BJ (cell line): ENCODE measurements at regions of chr6 and their contacts with region 1.

Region 1: GRCh38 chr6:73610444-73611275 is 43.1 kb downstream of the SLC17A5 start:
- DNase-seq: peak; percentile 31
- H3K4me3 ChIP-seq: no peak overlapping the region
- H3K27me3 ChIP-seq: no peaks in the 10 kb centered on the region
- CTCF ChIP-seq: peak; percentile 57

Region 2: GRCh38 chr6:73491377-73491776 is 119.3 kb before region 1 on chr6:
- CTCF ChIA-PET with region 1: interaction called, 14 read pairs
- POLR2A ChIA-PET with region 1: no interaction called
- DNase-seq: no peak
- H3K4me3 ChIP-seq: no peak overlapping the region
- H3K27me3 ChIP-seq: no peaks in the 10 kb centered on the region
- CTCF ChIP-seq: no peak

Region 3: DNA sequence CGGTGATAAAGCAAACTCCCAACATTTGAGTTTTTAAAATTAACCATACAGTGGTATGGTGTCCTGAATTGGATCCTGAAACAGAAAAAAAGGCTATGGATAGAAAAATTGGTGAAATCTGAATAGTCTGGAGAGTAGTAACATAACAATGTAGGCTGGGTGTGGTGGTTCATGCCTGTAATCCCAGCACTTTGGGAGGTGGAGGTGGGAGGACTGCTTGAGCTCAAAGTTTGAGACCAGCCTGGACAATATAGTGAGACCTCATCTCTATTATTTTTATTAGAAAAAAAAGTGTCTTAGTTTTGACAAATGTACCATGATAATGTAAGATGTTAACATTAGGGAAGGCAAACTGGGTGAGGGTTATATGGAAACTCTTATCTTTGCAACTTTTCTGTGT is 100.8 kb before region 1 on chr6:
- CTCF ChIA-PET with region 1: interaction called, 56 read pairs
- POLR2A ChIA-PET with region 1: interaction called, 6 read pairs
- DNase-seq: no peak
- H3K4me3 ChIP-seq: no peak overlapping the region
- H3K27me3 ChIP-seq: no peaks in the 10 kb centered on the region
- CTCF ChIP-seq: no peak

Region 4: GRCh38 chr6:73774311-73774787 is 163.7 kb after region 1 on chr6:
- CTCF ChIA-PET with region 1: no interaction called
- POLR2A ChIA-PET with region 1: no interaction called
- DNase-seq: peak; percentile 79
- H3K4me3 ChIP-seq: no peak overlapping the region
- H3K27me3 ChIP-seq: no peaks in the 10 kb centered on the region
- CTCF ChIP-seq: no peak

Region 5: GRCh38 chr6:73798592-73798991 is 187.9 kb after region 1 on chr6:
- CTCF ChIA-PET with region 1: no interaction called
- POLR2A ChIA-PET with region 1: no interaction called
- DNase-seq: peak; percentile 85
- H3K4me3 ChIP-seq: no peak overlapping the region
- H3K27me3 ChIP-seq: no peaks in the 10 kb centered on the region
- CTCF ChIP-seq: peak; percentile 71

Region 6: GRCh38 chr6:73929421-73929820 is 318.8 kb after region 1 on chr6:
- CTCF ChIA-PET with region 1: no interaction called
- POLR2A ChIA-PET with region 1: no interaction called
- DNase-seq: no peak
- H3K4me3 ChIP-seq: no peak overlapping the region
- H3K27me3 ChIP-seq: no peaks in the 10 kb centered on the region
- CTCF ChIP-seq: no peak